Heart left ventricle (tissue), 16 donors: ENCODE measurements at regions of chr7 and their contacts with region 1.

Region 1: GRCh38 chr7:105141068-105141467 is 127.1 kb downstream of the KMT2E start:
- DNase-seq: no peak
- ATAC-seq: no peak
- H3K4me3 ChIP-seq: no peak overlapping the region
- H3K27ac ChIP-seq: no peak overlapping the region
- H3K4me1 ChIP-seq: peaks cover 0 to 13% (median 5%) of the 10 kb centered on the region in 12 donors
- H3K27me3 ChIP-seq: no peaks in the 10 kb centered on the region
- CTCF ChIP-seq: peak in 5 of 12 donors; percentile 17 to 35 (median 24)
- POLR2A ChIP-seq: no peak

Region 2: GRCh38 chr7:105336009-105336408 is 194.9 kb after region 1 on chr7:
- intact Hi-C with region 1: loop called in 1 of 10 experiments (anchors 10 kb)
- DNase-seq: no peak
- ATAC-seq: no peak
- H3K4me3 ChIP-seq: no peak overlapping the region
- H3K27ac ChIP-seq: no peak overlapping the region
- H3K4me1 ChIP-seq: peaks cover 0 to 14% (median 5%) of the 10 kb centered on the region in 12 donors
- H3K27me3 ChIP-seq: no peaks in the 10 kb centered on the region
- CTCF ChIP-seq: peak; percentile 12 to 60 (median 47)
- POLR2A ChIP-seq: no peak

Region 3: DNA sequence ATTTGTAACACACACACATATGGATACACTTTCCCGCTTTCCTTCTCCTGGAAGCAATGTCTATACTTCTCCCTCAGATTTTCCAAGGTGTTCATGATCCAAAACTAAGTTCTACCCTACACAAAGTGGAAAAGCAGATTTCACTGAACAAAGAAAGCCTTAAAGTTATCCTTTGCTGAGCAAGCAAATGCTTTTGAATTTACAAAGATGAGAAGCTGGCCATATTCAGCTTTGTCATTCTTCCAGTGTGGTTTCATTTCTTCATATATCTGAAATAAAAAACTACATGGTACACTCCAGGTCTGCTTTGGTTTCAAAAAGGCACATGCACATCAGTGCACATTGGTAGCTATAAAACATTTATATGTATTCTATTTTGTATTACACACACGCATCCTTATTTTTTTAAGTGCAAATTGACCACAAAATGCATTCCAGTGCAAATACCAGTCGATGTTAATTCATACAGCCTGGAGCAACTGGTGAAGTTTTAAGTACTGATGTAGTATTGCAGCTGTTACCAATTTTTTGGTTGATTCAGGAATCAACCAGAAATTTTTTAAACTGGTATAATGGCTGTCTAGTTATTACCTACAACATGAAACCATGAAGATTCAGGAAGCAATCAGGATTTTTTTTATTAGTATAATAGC is 313.2 kb after region 1 on chr7:
- intact Hi-C with region 1: no loop called
- DNase-seq: no peak
- ATAC-seq: no peak
- H3K4me3 ChIP-seq: no peak overlapping the region
- H3K27ac ChIP-seq: no peak overlapping the region
- H3K4me1 ChIP-seq: peaks cover 0 to 4% (median 0%) of the 10 kb centered on the region in 12 donors
- H3K27me3 ChIP-seq: no peaks in the 10 kb centered on the region
- CTCF ChIP-seq: no peak
- POLR2A ChIP-seq: no peak